Panc1 (cell line): ENCODE measurements at regions of chr2 and their contacts with region 1.

Region 1: GRCh38 chr2:106582148-106583143 is 95.3 kb downstream of the CD8B2 start:
- DNase-seq: peak; percentile 64
- ATAC-seq: peak; percentile 90
- H3K4me3 ChIP-seq: peak overlapping the region; percentile 26 to 53
- H3K27ac ChIP-seq: no peak overlapping the region
- H3K4me1 ChIP-seq: peaks cover 3% of the 10 kb centered on the region; the same call in 1 of the 2 replicates
- H3K27me3 ChIP-seq: peaks cover 7% of the 10 kb centered on the region; the same call in 1 of the 2 replicates
- CTCF ChIP-seq: peak; percentile 93

Region 2: GRCh38 chr2:106614511-106615291 is 32.3 kb after region 1 on chr2:
- CTCF ChIA-PET with region 1: no interaction called
- POLR2A ChIA-PET with region 1: no interaction called
- in situ Hi-C with region 1: no loop called
- intact Hi-C with region 1: no loop called
- DNase-seq: no peak
- ATAC-seq: no peak
- H3K4me3 ChIP-seq: no peak overlapping the region
- H3K27ac ChIP-seq: no peak overlapping the region
- H3K4me1 ChIP-seq: no peaks in the 10 kb centered on the region
- H3K27me3 ChIP-seq: no peaks in the 10 kb centered on the region
- CTCF ChIP-seq: no peak

Region 3: GRCh38 chr2:108013305-108013704 is 1430.9 kb after region 1 on chr2:
- CTCF ChIA-PET with region 1: interaction called, 18 read pairs
- POLR2A ChIA-PET with region 1: no interaction called
- in situ Hi-C with region 1: no loop called
- intact Hi-C with region 1: no loop called
- DNase-seq: no peak
- ATAC-seq: no peak
- H3K4me3 ChIP-seq: no peak overlapping the region
- H3K27ac ChIP-seq: no peak overlapping the region
- H3K4me1 ChIP-seq: no peaks in the 10 kb centered on the region
- H3K27me3 ChIP-seq: no peaks in the 10 kb centered on the region
- CTCF ChIP-seq: no peak